CD8-positive, alpha-beta T cell (primary cell): ENCODE measurements at regions of chr5 and their contacts with region 1.

Region 1: DNA sequence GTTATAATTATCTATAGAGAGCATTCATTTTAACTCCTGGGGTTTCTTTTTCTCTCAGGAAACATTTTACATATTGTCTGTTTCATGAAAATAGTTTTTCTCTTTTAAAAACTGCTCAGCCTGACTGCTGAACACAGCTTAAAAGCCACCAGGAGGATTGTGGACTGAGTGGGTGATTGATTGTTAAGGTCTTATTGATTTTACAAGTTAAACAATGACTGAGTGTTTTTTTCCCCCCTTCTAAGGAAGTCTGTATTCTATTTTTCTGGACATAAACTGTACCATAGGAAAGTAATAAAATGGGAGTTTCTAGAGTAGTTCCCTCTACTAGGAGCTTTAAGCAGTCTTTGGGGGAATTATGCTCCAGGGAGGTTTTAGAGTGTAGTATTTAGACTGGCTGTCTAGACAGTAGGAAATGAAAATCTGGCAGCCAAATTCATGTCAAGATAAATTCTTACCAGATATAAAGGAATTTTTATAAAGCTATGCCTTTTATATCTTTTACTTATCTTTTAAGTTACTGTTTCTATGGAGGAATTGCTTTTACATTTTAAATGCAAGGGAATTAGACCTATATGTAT is 463.9 kb downstream of the PRR16 start:
- DNase-seq: no peak
- ATAC-seq: no peak
- H3K4me3 ChIP-seq: no peak overlapping the region
- H3K4me3 Mint-ChIP-seq: no peak overlapping the region
- H3K27ac ChIP-seq: no peak overlapping the region
- H3K27ac Mint-ChIP-seq: no peak overlapping the region
- H3K4me1 ChIP-seq: no peaks in the 10 kb centered on the region
- H3K4me1 Mint-ChIP-seq: no peaks in the 10 kb centered on the region
- H3K27me3 ChIP-seq: no peaks in the 10 kb centered on the region
- H3K27me3 Mint-ChIP-seq: no peaks in the 10 kb centered on the region
- CTCF ChIP-seq: no peak

Region 2: DNA sequence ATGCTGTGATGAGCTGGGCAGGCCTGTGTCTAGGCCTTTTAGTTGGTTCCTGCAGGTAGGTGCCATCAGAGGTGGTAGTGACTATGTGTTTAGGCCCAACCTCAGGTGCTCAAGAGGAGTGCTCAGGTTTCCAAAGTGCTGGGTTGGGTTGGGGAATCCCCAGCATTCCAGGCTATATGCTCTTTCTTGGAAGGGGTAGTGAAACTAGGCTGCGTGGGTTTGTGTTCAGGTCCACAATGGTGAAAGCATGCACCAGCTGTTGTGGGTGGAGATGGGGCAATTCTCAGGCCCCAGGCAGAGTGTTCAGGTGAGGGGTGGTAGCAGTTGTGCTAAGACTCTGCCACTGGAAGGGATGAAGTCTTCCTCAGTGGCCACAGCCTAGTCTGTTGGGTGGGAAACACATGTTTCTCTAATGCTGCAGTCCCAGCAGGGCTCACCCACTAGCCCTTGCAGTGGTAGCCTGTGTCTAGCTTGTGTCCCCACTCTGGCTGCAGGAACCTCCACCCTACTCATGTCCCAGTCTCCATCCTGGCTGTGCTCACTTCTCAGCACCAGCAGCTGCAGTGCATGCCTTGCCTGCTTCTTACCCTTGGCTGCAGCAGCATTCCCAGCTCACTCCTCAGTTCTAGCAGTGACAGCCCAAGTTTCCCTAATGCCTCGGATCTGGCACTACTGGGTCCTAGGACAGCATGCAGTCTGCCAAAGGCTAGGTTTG is 1219.8 kb before region 1 on chr5:
- CTCF ChIA-PET with region 1: no interaction called
- POLR2A ChIA-PET with region 1: no interaction called
- intact Hi-C with region 1: loop called in 1 of 2 experiments (anchors 5 kb)
- DNase-seq: no peak
- ATAC-seq: no peak
- H3K4me3 ChIP-seq: no peak overlapping the region
- H3K4me3 Mint-ChIP-seq: no peak overlapping the region
- H3K27ac ChIP-seq: no peak overlapping the region
- H3K27ac Mint-ChIP-seq: no peak overlapping the region
- H3K4me1 ChIP-seq: no peaks in the 10 kb centered on the region
- H3K4me1 Mint-ChIP-seq: no peaks in the 10 kb centered on the region
- H3K27me3 ChIP-seq: no peaks in the 10 kb centered on the region
- H3K27me3 Mint-ChIP-seq: peaks cover 14% of the 10 kb centered on the region
- CTCF ChIP-seq: no peak